GM12878 (cell line): ENCODE measurements at regions of chr17 and their contacts with region 1.

Region 1: DNA sequence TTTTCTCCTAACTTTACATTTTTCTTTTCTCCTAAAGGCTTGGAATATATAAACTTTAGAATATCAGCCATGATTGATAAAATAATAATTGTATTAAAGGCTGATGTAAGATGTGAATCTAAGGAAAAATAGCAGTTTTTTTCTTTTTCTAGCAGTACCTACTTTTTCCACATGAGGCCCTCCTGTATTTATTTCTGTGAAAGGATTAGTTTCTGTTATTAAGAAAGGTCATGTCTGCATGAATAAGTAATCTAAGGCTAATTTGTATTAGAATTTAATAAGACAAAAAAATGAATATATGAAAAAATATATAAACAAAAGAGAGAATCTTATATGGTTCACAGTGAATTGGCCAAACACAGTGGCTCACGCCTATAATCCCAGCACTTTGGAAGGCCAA is 85.3 kb downstream of the STXBP4 start:
- DNase-seq: no peak
- ATAC-seq: no peak
- H3K4me3 ChIP-seq: no peak overlapping the region
- H3K27ac ChIP-seq: no peak overlapping the region
- H3K4me1 ChIP-seq: no peaks in the 10 kb centered on the region
- H3K27me3 ChIP-seq: no peaks in the 10 kb centered on the region
- CTCF ChIP-seq: peak in 1 of 3 experiments; percentile 28; a peak in 2 of 6 replicates
- EP300 ChIP-seq: no peak
- POLR2A ChIP-seq: no peak
- RAD21 ChIP-seq: peak; percentile 58

Region 2: DNA sequence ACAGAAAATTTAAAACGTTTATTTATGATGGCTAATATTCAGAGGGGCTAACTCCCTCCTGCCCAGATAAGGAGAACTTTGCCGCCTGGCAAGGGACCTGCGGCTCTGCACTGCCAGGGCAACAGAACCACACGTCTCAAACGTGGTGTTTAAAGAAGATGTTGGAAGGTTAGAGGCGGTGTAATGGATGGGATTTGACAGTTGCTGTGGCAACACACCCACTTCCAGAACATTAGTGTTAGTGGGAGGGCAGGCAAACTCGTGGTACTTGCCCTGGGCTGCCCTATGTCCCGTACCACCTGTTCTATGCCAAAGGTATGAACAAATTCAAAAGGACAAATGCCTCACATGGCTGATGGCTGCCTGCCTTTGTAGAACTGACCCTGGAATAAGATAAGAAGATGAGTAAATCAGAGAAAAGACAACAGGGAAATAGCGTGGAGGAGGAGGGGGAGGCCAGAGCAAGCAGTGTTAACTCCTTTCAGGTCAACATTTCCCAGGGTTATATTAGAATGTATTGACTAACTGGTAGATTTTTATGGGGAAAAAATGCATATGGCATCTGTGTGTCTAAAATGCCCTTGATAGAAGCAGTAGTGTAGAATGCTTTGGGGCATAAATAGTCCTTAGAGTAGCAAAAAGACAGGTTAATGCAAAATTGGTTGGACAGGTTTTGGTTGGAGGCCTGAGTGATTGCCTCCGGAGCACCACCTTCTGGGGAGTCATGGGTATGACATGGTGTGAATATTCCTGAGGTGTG is 241.7 kb after region 1 on chr17:
- CTCF ChIA-PET with region 1: interaction called, 8 read pairs
- POLR2A ChIA-PET with region 1: no interaction called
- RAD21 ChIA-PET with region 1: interaction called, 4 read pairs
- SMC1A ChIA-PET with region 1: interaction called, 3 read pairs
- in situ Hi-C with region 1: no loop called
- intact Hi-C with region 1: loop called (anchors 5 kb)
- DNase-seq: no peak
- ATAC-seq: peak; percentile 90
- H3K4me3 ChIP-seq: no peak overlapping the region
- H3K27ac ChIP-seq: no peak overlapping the region
- H3K4me1 ChIP-seq: no peaks in the 10 kb centered on the region
- H3K27me3 ChIP-seq: peaks cover 0 to 1% of the 10 kb centered on the region in 2 experiments; a peak in 2 of 4 replicates
- CTCF ChIP-seq: peak; percentile 79 to 87 (median 85)
- EP300 ChIP-seq: no peak
- POLR2A ChIP-seq: no peak
- RAD21 ChIP-seq: peak; percentile 89

Region 3: GRCh38 chr17:55356434-55357328 is 302.8 kb after region 1 on chr17:
- CTCF ChIA-PET with region 1: interaction called, 7 read pairs
- POLR2A ChIA-PET with region 1: no interaction called
- RAD21 ChIA-PET with region 1: no interaction called
- SMC1A ChIA-PET with region 1: interaction called, 4 read pairs
- in situ Hi-C with region 1: no loop called
- intact Hi-C with region 1: loop called (anchors 5 kb)
- DNase-seq: peak; percentile 28
- ATAC-seq: peak; percentile 100
- H3K4me3 ChIP-seq: no peak overlapping the region
- H3K27ac ChIP-seq: no peak overlapping the region
- H3K4me1 ChIP-seq: no peaks in the 10 kb centered on the region
- H3K27me3 ChIP-seq: no peaks in the 10 kb centered on the region; a peak in 1 of 4 replicates
- CTCF ChIP-seq: peak; percentile 74 to 87 (median 84)
- EP300 ChIP-seq: no peak
- POLR2A ChIP-seq: no peak
- RAD21 ChIP-seq: peak; percentile 71